Breast epithelium (tissue), 4 donors: ENCODE measurements at regions of chr2 and their contacts with region 1.

Region 1: DNA sequence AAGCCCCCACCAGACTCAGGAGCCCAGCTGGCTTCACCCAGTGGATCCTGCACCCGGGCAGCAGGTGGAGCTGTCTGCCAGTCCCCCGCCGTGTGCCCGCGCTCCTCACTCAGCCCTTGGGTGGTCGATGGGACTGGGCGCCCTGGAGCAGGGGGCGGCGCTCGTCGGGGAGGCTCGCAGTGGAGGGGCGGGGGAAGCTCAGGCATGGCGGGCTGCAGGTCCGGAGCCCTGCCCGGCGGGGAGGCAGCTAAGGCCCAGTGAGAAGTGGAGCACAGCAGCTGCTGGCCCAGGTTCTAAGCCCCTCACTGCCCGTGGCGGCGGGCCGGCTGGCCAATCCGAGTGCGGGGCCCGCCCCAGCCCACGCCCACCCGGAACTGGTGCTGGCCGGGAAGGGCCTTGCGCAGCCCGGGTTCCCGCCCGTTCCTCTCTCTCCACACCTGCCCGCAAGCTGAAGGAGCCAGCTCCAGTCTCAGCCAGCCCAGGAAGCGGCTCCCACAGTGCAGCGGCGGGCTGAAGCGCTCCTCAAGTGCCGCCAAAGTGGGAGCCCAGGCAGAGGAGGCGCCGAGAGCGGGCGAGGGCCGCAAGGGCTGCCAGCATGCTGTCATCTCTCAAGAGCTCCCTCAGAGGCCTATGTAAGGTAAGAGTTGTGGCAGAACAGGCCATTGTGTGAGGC is 1307.8 kb upstream of the TMEFF2 start:
- DNase-seq: no peak
- H3K4me3 ChIP-seq: no peak overlapping the region
- H3K27ac ChIP-seq: no peak overlapping the region
- H3K4me1 ChIP-seq: no peaks in the 10 kb centered on the region
- H3K27me3 ChIP-seq: no peaks in the 10 kb centered on the region
- CTCF ChIP-seq: no peak
- POLR2A ChIP-seq: no peak

Region 2: DNA sequence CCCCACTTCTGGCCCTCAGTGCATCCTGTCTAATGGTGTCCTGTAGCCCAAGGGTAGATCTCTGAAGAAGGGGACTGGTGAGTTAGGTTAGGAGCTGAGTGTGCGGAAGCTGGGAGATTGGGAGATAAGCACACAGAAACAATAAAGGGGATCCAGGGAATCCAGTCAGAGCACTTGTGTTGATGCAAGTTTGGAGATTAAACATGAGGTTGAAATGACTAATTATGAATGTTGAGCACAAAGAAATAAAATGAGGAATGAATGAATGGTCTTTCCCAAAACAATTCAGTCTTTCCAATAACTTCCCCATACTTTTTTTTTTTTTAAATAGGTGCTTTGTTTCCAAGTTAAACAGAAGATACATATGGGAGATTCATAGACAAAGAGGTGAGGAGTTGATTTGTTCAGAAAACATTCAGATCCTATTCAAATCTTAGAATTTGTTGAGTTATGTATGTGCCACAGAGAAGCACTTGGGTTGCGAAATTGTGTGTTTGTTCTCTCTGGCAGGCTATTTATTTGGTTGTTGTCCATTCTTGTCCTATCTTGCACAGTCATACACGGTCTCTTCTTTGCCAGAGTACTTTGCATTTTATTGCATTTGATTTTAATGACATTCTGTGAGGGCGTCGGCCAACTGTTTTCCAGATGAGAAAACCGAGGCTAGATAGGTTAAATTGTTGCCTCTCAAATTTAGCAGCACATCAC is 1856.2 kb before region 1 on chr2:
- intact Hi-C with region 1: loop called (anchors 10 kb)
- DNase-seq: no peak
- H3K4me3 ChIP-seq: no peak overlapping the region
- H3K27ac ChIP-seq: no peak overlapping the region
- H3K4me1 ChIP-seq: no peaks in the 10 kb centered on the region
- H3K27me3 ChIP-seq: no peaks in the 10 kb centered on the region
- CTCF ChIP-seq: no peak
- POLR2A ChIP-seq: no peak

Region 3: DNA sequence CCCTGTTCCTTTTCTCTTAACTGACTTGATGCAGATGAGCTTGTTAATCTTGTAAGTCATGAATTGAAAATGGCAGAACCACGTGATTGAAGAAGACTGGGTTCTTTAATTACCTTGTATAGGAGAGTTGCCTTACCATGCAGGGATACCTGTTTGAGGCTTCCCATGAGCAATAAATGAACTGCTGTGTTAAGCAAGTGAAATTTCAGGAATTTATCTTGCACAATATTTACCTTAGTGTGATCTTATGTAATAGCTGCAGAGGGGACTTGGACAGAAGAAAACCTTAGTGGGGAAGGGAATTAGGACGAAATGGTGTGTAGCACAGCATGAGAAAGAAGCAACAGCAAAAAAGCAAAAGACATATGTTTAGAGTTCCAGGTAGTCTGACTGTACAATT is 923.7 kb before region 1 on chr2:
- intact Hi-C with region 1: no loop called
- DNase-seq: no peak
- H3K4me3 ChIP-seq: no peak overlapping the region
- H3K27ac ChIP-seq: no peak overlapping the region
- H3K4me1 ChIP-seq: no peaks in the 10 kb centered on the region
- H3K27me3 ChIP-seq: no peaks in the 10 kb centered on the region
- CTCF ChIP-seq: no peak
- POLR2A ChIP-seq: no peak

Region 4: GRCh38 chr2:193517615-193518014 is 15.1 kb after region 1 on chr2:
- intact Hi-C with region 1: no loop called
- DNase-seq: no peak
- H3K4me3 ChIP-seq: no peak overlapping the region
- H3K27ac ChIP-seq: no peak overlapping the region
- H3K4me1 ChIP-seq: no peaks in the 10 kb centered on the region
- H3K27me3 ChIP-seq: no peaks in the 10 kb centered on the region
- CTCF ChIP-seq: no peak
- POLR2A ChIP-seq: no peak